Natural killer cell (primary cell): ENCODE measurements at regions of chr7 and their contacts with region 1.

Region 1: DNA sequence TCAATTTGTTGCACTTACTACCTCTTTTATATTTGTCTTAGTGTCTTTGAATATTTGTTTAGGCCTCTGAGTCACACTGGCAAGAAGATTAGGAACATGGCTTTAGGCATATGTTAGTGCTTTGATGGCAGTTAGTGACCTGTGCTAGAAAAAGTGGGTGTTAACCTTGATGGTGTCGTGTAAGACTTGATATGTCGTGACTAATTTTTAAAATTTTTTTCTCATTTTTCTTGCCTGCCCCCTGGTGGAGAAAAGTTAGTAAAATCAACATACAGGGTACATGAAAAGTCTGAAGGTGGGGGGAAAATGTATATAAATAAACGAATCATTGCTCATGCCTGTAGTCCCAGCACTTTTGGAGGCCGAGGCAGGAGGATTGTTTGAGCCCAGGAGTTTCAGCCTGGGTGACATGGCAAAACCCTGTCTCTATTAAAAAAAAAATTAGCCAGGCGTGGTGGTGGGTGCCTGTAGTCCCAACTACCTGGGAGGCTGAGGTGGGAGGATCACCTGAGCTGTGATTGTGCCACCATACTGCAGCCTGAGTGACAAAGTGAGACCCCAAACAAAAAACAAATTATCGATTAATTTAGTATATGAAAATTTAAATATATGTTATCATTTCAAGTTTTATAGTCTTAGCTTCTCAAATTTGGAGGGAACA is 44.6 kb downstream of the TAX1BP1 start:
- DNase-seq: peak in 1 of 2 donors; percentile 70
- ATAC-seq: peak; percentile 54 to 90 (median 66)
- H3K4me3 ChIP-seq: no peak overlapping the region
- H3K4me3 Mint-ChIP-seq: no peak overlapping the region
- H3K27ac ChIP-seq: no peak overlapping the region
- H3K27ac Mint-ChIP-seq: no peak overlapping the region
- H3K4me1 ChIP-seq: no peaks in the 10 kb centered on the region
- H3K4me1 Mint-ChIP-seq: peaks cover 8 to 10% of the 10 kb centered on the region in 2 donors
- H3K27me3 ChIP-seq: no peaks in the 10 kb centered on the region
- H3K27me3 Mint-ChIP-seq: no peaks in the 10 kb centered on the region
- CTCF ChIP-seq: peak; percentile 81

Region 2: GRCh38 chr7:27947586-27948278 is 163.2 kb after region 1 on chr7:
- intact Hi-C with region 1: no loop called
- DNase-seq: no peak
- ATAC-seq: no peak
- H3K4me3 ChIP-seq: no peak overlapping the region
- H3K4me3 Mint-ChIP-seq: no peak overlapping the region
- H3K27ac ChIP-seq: no peak overlapping the region
- H3K27ac Mint-ChIP-seq: peak overlapping the region; percentile 47 to 55
- H3K4me1 ChIP-seq: no peaks in the 10 kb centered on the region
- H3K4me1 Mint-ChIP-seq: peaks cover 58 to 60% of the 10 kb centered on the region in 2 donors
- H3K27me3 ChIP-seq: no peaks in the 10 kb centered on the region
- H3K27me3 Mint-ChIP-seq: no peaks in the 10 kb centered on the region
- CTCF ChIP-seq: no peak

Region 3: DNA sequence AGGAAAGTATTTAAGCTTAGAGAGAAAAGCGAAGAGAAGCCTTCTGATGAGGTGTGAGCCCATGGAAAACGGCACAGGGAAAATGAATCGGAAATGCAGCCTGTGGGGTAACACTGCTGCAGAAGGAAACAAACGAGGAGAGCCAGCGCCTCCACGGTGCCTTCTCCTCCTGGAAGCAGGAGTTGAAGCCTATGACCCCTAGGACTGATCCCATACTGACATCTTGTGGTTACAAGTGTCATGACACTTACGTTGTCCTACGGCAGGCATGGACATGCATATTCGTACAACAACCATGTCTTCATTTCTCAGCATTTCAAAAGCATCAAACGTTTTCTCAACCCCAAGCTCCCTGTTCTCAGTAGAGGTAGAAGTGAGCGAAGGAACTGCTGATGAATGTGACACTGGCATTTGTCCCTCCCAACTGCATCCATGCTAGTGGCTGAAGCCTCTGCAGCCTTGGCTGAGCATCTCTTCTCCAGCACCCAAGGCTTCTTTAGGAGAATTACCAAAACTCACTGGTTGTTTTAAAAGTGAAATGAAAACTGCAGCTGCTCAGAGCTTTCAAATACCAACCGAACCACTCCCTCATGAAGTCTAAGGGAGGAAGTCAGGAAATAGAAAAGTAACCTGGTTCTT is 235.9 kb after region 1 on chr7:
- intact Hi-C with region 1: loop called (anchors 5 kb)
- DNase-seq: peak in 1 of 2 donors; percentile 75
- ATAC-seq: peak; percentile 73 to 92 (median 92)
- H3K4me3 ChIP-seq: no peak overlapping the region
- H3K4me3 Mint-ChIP-seq: no peak overlapping the region
- H3K27ac ChIP-seq: no peak overlapping the region
- H3K27ac Mint-ChIP-seq: peak overlapping the region; percentile 4 to 23
- H3K4me1 ChIP-seq: peaks cover 8% of the 10 kb centered on the region
- H3K4me1 Mint-ChIP-seq: peaks cover 75 to 83% of the 10 kb centered on the region in 2 donors
- H3K27me3 ChIP-seq: no peaks in the 10 kb centered on the region
- H3K27me3 Mint-ChIP-seq: no peaks in the 10 kb centered on the region
- CTCF ChIP-seq: peak; percentile 73